Posterior cingulate gyrus (tissue), 11 donors: ENCODE measurements at regions of chr16 and their contacts with region 1.

Region 1: DNA sequence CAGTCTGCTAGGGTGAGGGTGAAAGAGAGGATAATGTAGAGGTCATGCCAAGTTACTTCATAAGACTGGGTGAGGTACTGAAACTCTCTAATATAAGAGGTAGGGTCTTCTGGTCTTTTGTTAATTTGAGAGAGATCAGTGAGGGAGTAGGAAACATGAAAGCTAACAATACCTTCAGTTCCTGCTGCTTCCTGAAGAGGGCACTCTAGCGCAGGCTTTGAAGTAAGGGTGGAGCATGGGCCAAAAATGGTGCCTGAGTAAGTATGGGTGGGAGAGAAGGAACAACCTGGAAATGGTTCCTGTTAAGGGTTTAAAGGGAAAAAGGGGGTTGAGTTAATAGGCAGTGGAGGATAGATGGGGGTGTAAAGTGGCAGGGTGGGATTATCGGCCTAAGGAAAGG is 2449.5 kb downstream of the TP53TG3F start:
- DNase-seq: no peak

Region 2: GRCh38 chr16:35841632-35842031 is 67.3 kb before region 1 on chr16:
- intact Hi-C with region 1: loop called (anchors 10 kb)
- DNase-seq: no peak